Posterior cingulate gyrus (tissue), 11 donors: ENCODE measurements at regions of chr17 and their contacts with region 1.

Region 1: GRCh38 chr17:2592971-2593820 is at the start of gene PAFAH1B1:
- DNase-seq: peak; percentile 85 to 99 (median 90)

Region 2: GRCh38 chr17:2401426-2402221 is 191.6 kb before region 1 on chr17:
- intact Hi-C with region 1: loop called (anchors 5 kb)
- DNase-seq: peak; percentile 100

Region 3: DNA sequence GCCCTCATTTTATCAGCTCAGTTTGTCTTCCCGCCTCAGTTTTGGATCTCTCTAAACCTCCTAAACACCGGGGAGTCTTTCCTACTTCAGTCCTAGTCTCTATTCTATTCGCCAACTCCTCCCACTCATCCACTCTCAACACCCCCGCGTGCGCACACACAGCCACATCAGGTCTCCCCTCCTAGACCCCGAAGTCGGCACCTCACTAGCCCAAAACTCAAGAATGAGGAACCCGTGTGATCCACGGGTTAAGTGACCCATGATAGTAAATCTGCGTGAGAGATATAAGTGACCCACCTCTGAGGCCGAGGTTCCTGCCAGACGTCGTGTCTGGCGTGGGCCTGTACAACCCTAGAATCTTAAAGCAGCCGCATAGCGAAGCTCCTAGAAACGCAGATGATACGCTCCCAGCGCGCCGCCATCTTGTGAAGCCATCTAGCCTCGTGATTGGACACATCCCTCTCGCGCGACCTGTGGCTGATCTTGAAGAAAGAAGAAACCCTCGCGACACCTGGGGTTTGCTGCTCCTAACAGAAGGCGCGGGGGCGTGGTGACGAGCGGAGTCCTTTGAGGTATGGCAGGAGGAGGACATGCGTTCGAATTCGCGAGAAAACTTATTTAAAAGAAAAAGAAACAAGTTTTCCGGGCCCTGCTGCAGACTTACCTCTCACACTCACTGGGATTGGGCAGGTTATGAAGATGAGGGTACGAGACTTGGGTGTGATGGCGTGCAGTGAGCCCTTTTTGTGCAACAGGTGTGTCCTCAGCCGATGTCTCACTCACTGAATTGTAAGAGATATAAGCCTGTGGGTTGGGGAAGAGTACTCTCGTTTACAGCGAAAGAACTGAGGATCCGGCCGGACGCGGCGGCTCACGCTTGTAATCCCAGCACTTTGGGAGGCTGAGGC is 81.5 kb before region 1 on chr17 and contains the start of gene METTL16:
- intact Hi-C with region 1: loop called (anchors 2 kb)
- DNase-seq: peak; percentile 87 to 99 (median 97)

Region 4: DNA sequence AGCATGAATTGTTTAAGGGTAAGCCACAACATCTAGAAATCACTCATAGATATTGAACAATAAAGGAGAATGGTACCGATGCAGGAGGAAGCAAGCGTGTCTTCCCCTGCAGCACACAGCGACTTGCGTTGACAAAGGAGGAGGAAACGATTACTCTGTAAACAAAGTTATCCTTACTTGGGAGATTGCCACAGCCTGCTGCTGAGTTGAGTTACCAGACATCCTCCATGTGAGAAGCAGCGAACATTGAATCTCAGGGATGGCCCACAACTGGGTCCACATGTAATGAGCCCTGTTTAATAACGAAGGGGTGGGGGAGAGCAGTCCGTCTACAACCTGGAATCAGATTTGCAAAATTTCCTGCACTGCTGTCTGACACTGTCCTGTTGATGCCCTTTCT is 90.7 kb after region 1 on chr17:
- intact Hi-C with region 1: loop called (anchors 5 kb)
- DNase-seq: no peak

Region 5: DNA sequence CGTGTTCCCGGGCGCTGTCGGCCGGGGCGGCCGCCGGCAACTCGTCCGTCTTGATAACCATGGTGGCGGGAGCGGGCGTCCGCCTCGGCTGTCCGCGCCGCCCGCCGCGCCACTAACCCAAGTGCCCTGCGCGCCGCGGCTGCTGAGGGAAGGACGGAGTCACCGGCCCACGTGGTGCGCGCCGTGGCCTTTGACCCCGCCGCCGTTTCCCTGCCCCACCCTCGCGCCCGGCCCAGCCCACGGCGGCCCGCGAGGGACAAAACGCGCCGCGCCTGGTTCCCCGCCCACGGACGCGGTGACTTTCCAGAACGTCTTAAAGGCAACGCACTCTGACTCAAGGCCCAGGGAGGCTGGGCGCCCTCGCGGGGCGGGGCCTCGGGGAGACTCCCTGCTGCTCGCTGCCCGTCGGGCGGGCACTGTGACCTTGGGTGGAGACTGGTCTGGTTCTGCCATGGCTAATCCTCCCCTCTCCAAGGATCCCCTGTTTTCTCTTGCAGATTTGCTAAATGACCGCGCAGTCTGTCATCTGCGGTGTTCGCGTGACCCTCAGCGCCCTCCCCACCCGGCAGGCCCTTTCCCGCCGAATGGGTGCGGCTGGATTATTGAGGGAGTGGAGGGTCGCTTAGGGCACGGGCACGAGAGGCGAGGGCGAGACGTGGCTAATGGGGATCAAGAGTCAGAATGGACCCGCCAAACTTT is 118.6 kb after region 1 on chr17 and contains the start of gene CLUH:
- intact Hi-C with region 1: loop called (anchors 10 kb)
- DNase-seq: peak; percentile 89 to 99 (median 94)